Caco-2 (cell line): ENCODE measurements at regions of chr16 and their contacts with region 1.

Region 1: GRCh38 chr16:30370444-30371247 is at the start of gene TBC1D10B:
- DNase-seq: peak; percentile 98 to 99
- H3K4me3 ChIP-seq: peak within 1 kb of the TSS; percentile 63
- H3K4me3 Mint-ChIP-seq: peak within 1 kb of the TSS; percentile 83
- H3K27ac Mint-ChIP-seq: peak within 1 kb of the TSS; percentile 99
- H3K4me1 ChIP-seq: peaks cover 21% of the 10 kb centered on the region
- H3K4me1 Mint-ChIP-seq: peaks cover 33% of the 10 kb centered on the region
- H3K27me3 ChIP-seq: no peaks in the 10 kb centered on the region
- H3K27me3 Mint-ChIP-seq: no peaks in the 10 kb centered on the region
- CTCF ChIP-seq: peak; percentile 17 to 40
- total RNA-seq, gene TBC1D10B: 36.9 and 40.5 TPM in 2 replicates

Region 2: DNA sequence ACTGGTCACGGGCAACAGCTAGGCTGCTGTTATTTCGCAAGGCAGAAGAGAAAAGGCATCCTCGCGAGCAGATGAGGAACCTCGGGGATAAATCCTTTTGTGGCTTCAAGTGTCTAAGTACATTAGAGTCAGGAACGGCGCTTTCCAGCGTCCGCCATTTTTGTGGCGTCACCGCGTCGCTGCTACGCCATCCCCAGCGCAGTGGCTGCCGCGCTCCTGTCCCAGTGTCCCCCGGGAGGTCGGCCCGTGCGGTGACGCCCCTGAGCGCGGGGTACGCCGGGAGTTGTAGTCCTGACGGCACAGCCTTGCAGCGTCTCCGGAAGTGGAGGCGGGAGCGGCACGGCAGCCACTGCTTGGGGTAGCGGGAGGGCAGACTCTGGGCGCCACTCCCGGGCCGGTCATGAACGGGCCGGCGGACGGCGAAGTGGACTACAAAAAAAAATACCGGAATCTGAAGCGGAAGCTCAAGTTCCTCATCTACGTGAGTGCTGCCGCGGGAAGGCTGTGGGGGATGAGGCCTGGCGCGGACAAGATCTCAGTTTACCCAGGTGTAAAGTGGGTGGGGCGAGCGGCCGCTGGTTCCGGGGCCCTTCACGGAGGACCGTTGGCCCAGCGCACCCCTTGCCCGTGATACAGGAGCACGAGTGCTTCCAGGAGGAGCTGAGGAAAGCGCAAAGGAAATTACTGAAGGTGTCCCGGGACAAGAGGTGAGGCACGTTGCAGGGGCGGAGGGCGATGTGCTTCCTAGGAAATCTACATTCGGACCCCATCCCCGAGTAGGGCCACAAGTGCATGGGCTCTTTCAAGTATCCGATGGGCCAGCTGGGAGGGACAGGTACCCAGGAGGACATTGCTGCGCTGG is 374.5 kb before region 1 on chr16 and contains the start of gene INO80E:
- CTCF ChIA-PET with region 1: no interaction called
- POLR2A ChIA-PET with region 1: no interaction called
- intact Hi-C with region 1: no loop called
- DNase-seq: peak; percentile 97 to 98
- H3K4me3 ChIP-seq: peak within 1 kb of the TSS; percentile 68
- H3K4me3 Mint-ChIP-seq: peak within 1 kb of the TSS; percentile 99
- H3K27ac Mint-ChIP-seq: peak within 1 kb of the TSS; percentile 65
- H3K4me1 ChIP-seq: peaks cover 11% of the 10 kb centered on the region; the same call in 1 of the 2 replicates
- H3K4me1 Mint-ChIP-seq: peaks cover 12% of the 10 kb centered on the region
- H3K27me3 ChIP-seq: no peaks in the 10 kb centered on the region
- H3K27me3 Mint-ChIP-seq: no peaks in the 10 kb centered on the region
- CTCF ChIP-seq: no peak
- total RNA-seq, gene INO80E: 58.6 and 58.8 TPM in 2 replicates

Region 3: GRCh38 chr16:30065143-30065850 is 305.3 kb before region 1 on chr16 and contains the start of gene ALDOA:
- CTCF ChIA-PET with region 1: no interaction called
- POLR2A ChIA-PET with region 1: interaction called, 13 read pairs
- intact Hi-C with region 1: no loop called
- DNase-seq: peak; percentile 95 to 96
- H3K4me3 ChIP-seq: peak within 1 kb of the TSS; percentile 98
- H3K4me3 Mint-ChIP-seq: peak within 1 kb of the TSS; percentile 95
- H3K27ac Mint-ChIP-seq: peak within 1 kb of the TSS; percentile 97
- H3K4me1 ChIP-seq: peaks cover 8% of the 10 kb centered on the region; the same call in 1 of the 2 replicates
- H3K4me1 Mint-ChIP-seq: peaks cover 19% of the 10 kb centered on the region
- H3K27me3 ChIP-seq: no peaks in the 10 kb centered on the region
- H3K27me3 Mint-ChIP-seq: no peaks in the 10 kb centered on the region
- CTCF ChIP-seq: no peak
- total RNA-seq, gene ALDOA: 675 and 802 TPM in 2 replicates

Region 4: DNA sequence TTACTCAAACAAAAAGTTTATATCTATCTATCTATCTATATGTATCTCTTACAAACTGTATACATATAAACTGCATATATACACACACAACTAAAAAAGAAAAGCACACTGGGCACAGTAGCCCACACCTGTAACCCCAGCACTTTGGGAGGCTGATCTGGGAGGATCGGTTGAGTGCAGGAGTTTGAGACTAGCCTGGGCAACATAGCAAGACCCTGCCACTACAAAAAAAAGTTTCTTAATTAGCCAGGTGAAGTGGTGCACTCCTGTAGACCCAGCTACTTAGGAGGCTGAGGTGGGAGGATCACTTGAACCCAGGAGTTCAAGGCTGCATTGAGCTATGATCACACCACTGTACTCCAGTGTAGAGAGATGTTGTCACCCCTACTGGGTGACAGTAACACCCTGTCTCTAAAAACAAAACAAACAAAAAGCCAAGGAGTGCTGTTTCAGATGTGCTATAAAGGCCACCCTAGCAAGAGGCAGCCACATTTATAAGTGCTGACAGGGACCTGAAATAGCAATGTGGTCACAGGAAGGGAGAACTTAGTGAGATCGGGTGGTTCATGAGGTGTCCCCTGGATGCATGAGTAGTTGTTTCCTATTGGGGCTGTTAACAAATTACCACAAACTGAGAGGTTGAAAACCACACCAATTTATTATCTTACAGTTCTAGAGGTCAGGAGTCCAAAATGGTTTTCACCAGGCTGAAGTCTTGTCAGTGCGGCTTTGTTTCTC is 20.3 kb before region 1 on chr16:
- CTCF ChIA-PET with region 1: interaction called, 5 read pairs
- POLR2A ChIA-PET with region 1: interaction called, 30 read pairs
- intact Hi-C with region 1: no loop called
- DNase-seq: no peak
- H3K4me3 ChIP-seq: no peak overlapping the region
- H3K4me3 Mint-ChIP-seq: no peak overlapping the region
- H3K27ac Mint-ChIP-seq: no peak overlapping the region
- H3K4me1 ChIP-seq: no peaks in the 10 kb centered on the region
- H3K4me1 Mint-ChIP-seq: no peaks in the 10 kb centered on the region
- H3K27me3 ChIP-seq: no peaks in the 10 kb centered on the region
- H3K27me3 Mint-ChIP-seq: no peaks in the 10 kb centered on the region
- CTCF ChIP-seq: no peak

Region 5: DNA sequence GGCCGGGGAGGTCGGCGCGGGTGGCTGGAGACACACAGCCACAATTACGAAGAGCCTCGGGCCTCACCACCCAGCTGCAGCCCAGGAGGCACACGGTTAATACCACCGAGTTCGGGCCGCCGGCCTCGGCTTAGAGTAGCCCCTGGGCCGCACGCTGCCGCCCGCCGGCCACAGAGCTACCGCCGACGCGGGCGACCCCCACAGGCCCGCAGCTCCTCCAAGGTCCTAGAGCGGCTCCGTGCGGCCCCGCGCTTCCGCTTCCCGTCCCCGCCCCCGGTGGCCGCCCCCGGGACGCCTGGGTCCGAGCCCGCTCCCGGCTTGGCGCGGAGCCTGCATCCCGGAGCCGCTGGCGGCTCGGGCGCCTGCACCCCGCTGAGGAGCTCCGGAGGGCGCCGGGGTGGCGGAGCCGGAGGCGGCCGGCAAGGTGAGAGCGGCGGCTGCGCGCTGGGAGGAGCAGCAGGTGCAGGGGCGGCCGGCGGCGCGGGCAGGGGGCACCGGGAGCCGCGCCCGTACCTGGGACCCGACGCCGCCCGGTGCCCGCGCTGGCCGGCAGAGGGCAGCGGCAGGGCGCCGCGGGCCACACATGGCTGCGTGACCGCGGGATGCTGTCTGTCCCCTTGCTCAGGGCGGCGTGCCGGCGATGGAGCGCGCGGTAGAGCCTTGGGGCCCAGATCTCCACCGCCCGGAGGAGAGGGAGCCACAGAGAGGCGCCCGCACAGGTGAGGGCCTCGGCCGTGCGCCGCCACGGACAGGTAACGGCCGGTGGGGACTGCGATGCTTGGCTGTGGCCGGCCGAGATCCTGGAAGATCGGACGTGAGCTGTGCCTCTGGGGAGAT is 24.7 kb after region 1 on chr16 and contains the start of gene ZNF48:
- CTCF ChIA-PET with region 1: interaction called, 17 read pairs
- POLR2A ChIA-PET with region 1: interaction called, 10 read pairs
- intact Hi-C with region 1: no loop called
- DNase-seq: peak; percentile 87 to 91
- H3K4me3 ChIP-seq: peak within 1 kb of the TSS; percentile 88
- H3K4me3 Mint-ChIP-seq: peak within 1 kb of the TSS; percentile 82
- H3K27ac Mint-ChIP-seq: peak within 1 kb of the TSS; percentile 46
- H3K4me1 ChIP-seq: peaks cover 6% of the 10 kb centered on the region; the same call in 1 of the 2 replicates
- H3K4me1 Mint-ChIP-seq: peaks cover 19% of the 10 kb centered on the region
- H3K27me3 ChIP-seq: no peaks in the 10 kb centered on the region
- H3K27me3 Mint-ChIP-seq: no peaks in the 10 kb centered on the region
- CTCF ChIP-seq: peak in 1 of 2 experiments; percentile 40
- total RNA-seq, gene ZNF48: 12.8 and 13.4 TPM in 2 replicates

Region 6: DNA sequence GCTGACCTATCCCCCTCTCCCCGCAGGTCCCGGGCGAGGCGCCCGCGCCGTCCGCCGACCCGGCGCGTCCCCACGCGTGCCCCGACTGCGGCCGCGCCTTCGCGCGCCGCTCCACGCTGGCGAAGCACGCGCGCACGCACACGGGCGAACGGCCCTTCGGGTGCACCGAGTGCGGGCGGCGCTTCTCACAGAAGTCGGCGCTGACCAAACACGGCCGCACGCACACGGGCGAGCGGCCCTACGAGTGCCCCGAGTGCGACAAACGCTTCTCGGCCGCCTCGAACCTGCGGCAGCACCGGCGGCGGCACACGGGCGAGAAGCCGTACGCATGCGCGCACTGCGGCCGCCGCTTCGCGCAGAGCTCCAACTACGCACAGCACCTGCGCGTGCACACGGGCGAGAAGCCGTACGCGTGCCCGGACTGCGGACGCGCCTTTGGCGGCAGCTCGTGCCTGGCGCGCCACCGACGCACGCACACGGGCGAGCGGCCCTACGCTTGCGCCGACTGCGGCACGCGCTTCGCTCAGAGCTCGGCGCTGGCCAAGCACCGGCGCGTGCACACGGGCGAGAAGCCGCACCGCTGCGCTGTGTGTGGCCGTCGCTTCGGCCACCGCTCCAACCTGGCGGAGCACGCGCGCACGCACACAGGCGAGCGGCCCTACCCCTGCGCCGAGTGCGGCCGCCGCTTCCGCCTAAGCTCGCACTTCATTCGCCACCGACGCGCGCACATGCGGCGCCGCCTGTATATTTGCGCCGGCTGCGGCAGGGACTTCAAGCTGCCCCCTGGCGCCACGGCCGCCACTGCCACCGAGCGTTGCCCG is 47.1 kb after region 1 on chr16:
- CTCF ChIA-PET with region 1: interaction called, 9 read pairs
- POLR2A ChIA-PET with region 1: interaction called, 11 read pairs
- intact Hi-C with region 1: no loop called
- DNase-seq: peak; percentile 89 to 91
- H3K4me3 ChIP-seq: peak overlapping the region; percentile 93
- H3K4me3 Mint-ChIP-seq: peak overlapping the region; percentile 60
- H3K27ac Mint-ChIP-seq: no peak overlapping the region
- H3K4me1 ChIP-seq: peaks cover 11% of the 10 kb centered on the region; the same call in 1 of the 2 replicates
- H3K4me1 Mint-ChIP-seq: peaks cover 16% of the 10 kb centered on the region
- H3K27me3 ChIP-seq: no peaks in the 10 kb centered on the region
- H3K27me3 Mint-ChIP-seq: no peaks in the 10 kb centered on the region
- CTCF ChIP-seq: peak in 1 of 2 experiments; percentile 41